ENCODE measurements at regions of chr13 and their contacts with region 1.

Region 1: DNA sequence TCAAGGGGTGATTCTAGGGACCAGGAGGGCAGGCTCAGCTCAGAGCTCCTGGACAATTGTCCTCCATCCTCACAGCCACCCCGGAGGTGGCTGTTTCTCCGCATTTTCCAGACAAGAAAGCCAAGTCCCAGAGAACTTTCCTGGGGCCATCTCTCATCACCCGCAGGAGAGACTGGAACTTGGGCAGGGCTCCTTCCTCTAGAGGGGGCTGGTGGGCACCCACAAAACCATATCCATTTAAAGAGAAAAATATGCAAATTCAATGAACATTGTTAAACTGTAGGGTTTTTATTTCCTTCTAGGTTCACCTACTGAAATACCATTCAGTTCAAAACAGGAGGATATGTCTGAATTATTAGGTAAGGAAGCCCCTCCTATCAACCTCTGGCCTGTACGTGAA is 16.6 kb downstream of the SPACA7 start:
- DNase-seq: no peak
- ATAC-seq: no peak
- H3K4me3 ChIP-seq: no peak overlapping the region
- H3K4me3 Mint-ChIP-seq: no peak overlapping the region
- H3K27ac ChIP-seq: no peak overlapping the region
- H3K27ac Mint-ChIP-seq: no peak overlapping the region
- H3K4me1 ChIP-seq: no peaks in the 10 kb centered on the region
- H3K4me1 Mint-ChIP-seq: no peaks in the 10 kb centered on the region
- H3K27me3 ChIP-seq: no peaks in the 10 kb centered on the region
- H3K27me3 Mint-ChIP-seq: peaks cover 4% of the 10 kb centered on the region
- CTCF ChIP-seq: no peak

Region 2: DNA sequence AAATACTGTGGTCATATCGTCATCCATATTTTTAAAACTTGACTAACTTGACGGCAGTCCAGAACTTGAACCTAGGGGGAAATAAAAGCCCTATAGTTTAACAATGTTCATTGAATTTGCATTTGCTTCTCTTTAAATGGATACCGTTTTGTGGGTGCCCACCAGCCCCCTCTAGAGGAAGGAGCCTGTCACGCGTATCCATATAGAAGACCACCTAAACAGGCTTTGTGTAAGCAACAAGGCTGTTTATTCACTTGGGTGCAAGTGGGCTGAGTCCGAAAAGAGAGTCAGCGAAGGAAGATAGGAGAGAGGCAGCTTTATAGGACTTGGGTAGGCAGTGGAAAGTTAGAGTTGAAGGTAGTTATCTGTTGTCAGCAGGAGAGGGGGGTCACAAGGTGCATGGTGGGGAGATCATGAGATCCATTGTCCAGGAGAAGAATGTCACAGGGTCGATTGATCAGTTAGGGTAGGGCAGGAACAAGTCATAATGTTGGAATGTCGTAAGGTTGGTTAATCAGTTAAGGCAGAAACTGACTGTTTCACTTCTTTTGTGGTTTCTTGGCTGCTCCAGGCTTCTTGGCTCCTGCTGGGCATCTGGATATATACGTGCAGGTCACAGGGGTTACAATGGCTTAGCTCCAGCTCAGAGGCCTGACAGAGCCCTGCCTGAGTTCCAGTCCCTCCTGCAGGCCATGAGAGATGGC is 1435.4 kb before region 1 on chr13:
- CTCF ChIA-PET with region 1: no interaction called
- POLR2A ChIA-PET with region 1: no interaction called
- intact Hi-C with region 1: loop called in 1 of 2 experiments (anchors 10 kb)
- DNase-seq: no peak
- ATAC-seq: no peak
- H3K4me3 ChIP-seq: no peak overlapping the region
- H3K4me3 Mint-ChIP-seq: no peak overlapping the region
- H3K27ac ChIP-seq: no peak overlapping the region
- H3K27ac Mint-ChIP-seq: no peak overlapping the region
- H3K4me1 ChIP-seq: no peaks in the 10 kb centered on the region
- H3K4me1 Mint-ChIP-seq: no peaks in the 10 kb centered on the region
- H3K27me3 ChIP-seq: no peaks in the 10 kb centered on the region
- H3K27me3 Mint-ChIP-seq: peaks cover 8% of the 10 kb centered on the region
- CTCF ChIP-seq: no peak

Region 3: DNA sequence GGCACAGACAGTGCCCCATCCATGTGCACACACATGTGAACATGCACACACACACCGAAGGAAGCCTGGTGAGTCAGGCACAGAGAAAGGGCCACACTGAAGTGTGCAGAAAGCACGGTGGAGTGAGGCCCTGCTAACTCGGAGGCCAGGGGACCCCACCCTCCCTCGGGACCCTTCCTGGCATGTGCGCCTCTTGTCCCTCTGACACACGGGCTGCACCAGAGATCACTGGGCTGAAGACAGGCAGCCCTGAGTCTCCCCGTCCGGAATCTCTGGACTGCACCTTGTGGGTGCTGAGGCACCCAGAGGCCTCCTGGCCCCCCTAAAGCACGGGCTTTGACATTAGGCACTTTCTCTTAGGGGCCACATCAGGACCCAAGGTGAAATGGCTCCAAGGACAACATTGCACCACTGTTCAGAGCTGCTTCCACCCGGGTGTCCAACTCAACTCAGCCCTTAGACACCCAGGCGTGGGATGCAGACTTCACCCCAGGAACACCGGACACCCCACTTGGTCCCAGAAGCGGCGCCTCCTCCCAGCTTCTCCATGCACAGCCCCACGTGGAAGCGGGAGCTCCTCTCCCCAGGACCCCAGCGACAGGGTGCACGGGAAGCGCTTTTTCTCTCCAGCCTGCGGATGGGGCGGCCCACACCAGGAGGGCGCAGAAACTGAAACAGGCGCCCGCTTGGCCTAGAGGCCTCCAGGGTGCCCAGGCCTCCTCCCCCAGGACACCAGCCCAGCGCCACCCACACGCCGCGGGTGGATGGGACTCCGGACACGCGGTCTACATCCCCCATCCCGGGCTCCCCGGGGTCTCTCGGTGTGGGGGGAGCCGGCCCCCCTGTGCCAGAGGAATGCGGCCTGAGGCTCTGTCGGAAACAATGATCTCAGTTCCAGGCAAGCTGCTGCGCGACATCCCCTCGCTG is 73.7 kb after region 1 on chr13:
- CTCF ChIA-PET with region 1: no interaction called
- POLR2A ChIA-PET with region 1: no interaction called
- intact Hi-C with region 1: no loop called
- DNase-seq: no peak
- ATAC-seq: no peak
- H3K4me3 ChIP-seq: no peak overlapping the region
- H3K4me3 Mint-ChIP-seq: no peak overlapping the region
- H3K27ac ChIP-seq: no peak overlapping the region
- H3K27ac Mint-ChIP-seq: no peak overlapping the region
- H3K4me1 ChIP-seq: no peaks in the 10 kb centered on the region
- H3K4me1 Mint-ChIP-seq: no peaks in the 10 kb centered on the region
- H3K27me3 ChIP-seq: no peaks in the 10 kb centered on the region
- H3K27me3 Mint-ChIP-seq: peaks cover 8% of the 10 kb centered on the region
- CTCF ChIP-seq: no peak

Measured in CD8-positive, alpha-beta T cell (primary cell).